ENCODE measurements at regions of chr12 and their contacts with region 1.

Region 1: DNA sequence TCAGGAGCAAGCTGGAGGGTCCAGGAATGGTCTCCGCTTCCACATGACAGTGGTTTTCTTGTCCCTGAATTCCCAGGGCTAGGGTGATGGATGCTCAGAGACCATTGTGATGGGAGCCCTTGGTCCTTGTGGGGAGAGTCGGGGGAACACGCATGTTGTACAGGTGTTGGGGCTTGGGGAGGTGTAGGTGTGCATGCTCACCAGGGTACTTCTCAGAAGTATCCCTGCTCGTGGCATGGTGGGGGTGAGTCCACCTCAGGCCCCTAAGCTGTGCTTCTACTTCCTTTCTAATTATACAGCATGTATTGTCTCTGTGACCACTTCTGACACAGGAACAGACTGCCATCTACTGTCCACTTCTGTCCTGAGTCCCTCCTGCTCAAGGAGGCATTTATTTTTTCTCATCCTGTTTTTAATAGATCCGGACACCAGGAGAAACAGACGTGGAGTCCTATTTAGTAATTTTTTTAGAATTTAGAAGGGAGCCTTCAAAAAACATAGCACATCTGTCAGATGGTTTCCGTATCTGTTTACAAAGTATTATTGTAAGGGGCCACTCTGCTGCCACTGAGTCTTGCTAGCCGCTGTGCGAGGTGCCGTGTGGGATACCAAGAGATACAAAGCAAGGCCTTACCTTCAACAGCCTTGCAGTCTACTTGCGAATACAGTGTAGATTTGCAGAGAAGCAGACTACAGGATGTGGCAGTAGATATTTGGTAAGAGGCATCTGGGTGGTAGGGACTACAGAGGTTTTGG is 10.5 kb downstream of the NTF3 start:
- DNase-seq: peak; percentile 43
- H3K4me3 ChIP-seq: no peak overlapping the region
- H3K27ac ChIP-seq: no peak overlapping the region
- H3K4me1 ChIP-seq: peaks cover 5% of the 10 kb centered on the region
- H3K27me3 ChIP-seq: peaks cover under 1% of the 10 kb centered on the region
- CTCF ChIP-seq: peak; percentile 83 to 87

Region 2: DNA sequence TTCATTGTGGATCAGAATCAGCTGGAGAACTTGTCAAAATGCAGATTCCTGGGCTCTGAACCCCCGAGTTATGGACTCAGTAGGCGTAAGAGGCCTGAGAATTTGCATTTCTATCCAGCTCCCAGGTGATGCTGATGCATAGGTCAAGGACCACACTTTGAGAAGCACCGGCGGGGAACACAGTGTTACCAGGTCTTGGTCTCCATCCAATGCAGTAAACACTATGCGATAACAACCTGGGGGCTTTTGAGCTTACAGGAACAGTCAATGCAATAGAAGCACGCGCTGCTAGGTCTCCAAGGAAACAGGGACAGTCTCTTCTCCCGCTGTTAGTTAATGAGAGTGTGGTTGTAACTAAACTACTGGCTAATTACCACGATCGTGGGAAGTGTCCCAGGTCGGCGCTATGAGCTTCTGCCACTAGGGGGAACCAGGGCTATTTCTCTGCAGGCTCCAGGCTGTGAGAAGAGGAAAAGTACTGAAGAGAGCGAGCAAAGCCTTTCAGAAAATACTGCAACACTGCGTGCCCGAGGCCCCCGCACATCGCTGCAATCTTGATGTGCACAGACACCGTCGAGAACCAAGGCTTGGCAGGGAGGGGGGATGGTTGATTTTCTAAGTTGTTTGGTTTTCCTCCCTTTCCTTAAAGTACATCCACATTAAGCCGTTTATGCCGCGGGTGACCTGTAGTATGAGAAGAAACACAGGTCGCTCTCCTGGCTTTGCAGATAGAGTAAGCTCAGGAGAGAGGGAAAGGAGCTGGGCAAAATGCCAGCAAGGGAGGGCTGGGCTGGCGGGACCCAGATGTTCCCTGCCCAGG is 584.7 kb before region 1 on chr12:
- CTCF ChIA-PET with region 1: no interaction called
- dilution Hi-C with region 1: no loop called
- in situ Hi-C with region 1: no loop called
- intact Hi-C with region 1: loop called (anchors 2 kb)
- DNase-seq: peak; percentile 39
- H3K4me3 ChIP-seq: no peak overlapping the region
- H3K27ac ChIP-seq: no peak overlapping the region
- H3K4me1 ChIP-seq: no peaks in the 10 kb centered on the region
- H3K27me3 ChIP-seq: no peaks in the 10 kb centered on the region
- CTCF ChIP-seq: peak; percentile 88 to 93

Region 3: DNA sequence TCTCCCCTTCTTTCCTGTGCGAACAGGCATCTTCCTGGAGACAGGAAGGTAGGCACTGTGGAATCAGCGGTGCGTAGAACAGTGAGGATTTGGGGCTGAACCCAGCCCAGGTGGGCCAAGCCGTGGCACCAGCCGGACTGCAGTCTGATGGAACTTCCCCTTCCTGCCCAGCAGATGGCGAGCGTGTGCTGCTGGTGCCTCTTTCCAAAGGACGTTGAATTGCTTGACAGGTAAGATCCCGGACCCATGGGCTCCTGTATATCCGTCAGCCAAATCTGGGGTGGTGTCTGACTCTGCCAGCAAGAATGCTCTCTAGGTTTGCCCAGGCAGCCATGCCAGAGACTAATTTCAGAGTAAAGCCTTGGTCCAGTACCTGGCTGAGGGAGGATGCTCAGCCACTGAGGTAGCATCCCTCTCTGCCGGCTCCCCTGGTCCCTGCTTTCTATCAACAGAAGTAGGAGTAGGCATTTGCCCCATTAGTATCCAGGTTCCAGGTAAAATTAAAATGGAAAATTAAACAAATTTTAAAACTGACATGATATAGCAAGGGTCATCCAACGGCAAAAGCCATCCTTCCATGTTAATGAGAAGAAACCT is 419.9 kb before region 1 on chr12:
- CTCF ChIA-PET with region 1: no interaction called
- dilution Hi-C with region 1: no loop called
- in situ Hi-C with region 1: loop called in 1 of 2 experiments (anchors 10 kb)
- intact Hi-C with region 1: loop called (anchors 1 kb)
- DNase-seq: peak; percentile 43
- H3K4me3 ChIP-seq: no peak overlapping the region
- H3K27ac ChIP-seq: no peak overlapping the region
- H3K4me1 ChIP-seq: peaks cover 6% of the 10 kb centered on the region
- H3K27me3 ChIP-seq: peaks cover 3% of the 10 kb centered on the region
- CTCF ChIP-seq: peak; percentile 81 to 94

Region 4: GRCh38 chr12:5096241-5096935 is 346.0 kb before region 1 on chr12:
- CTCF ChIA-PET with region 1: no interaction called
- dilution Hi-C with region 1: no loop called
- in situ Hi-C with region 1: no loop called
- intact Hi-C with region 1: loop called (anchors 1 kb)
- DNase-seq: peak; percentile 38
- H3K4me3 ChIP-seq: no peak overlapping the region
- H3K27ac ChIP-seq: no peak overlapping the region
- H3K4me1 ChIP-seq: peaks cover 3% of the 10 kb centered on the region
- H3K27me3 ChIP-seq: peaks cover 5% of the 10 kb centered on the region
- CTCF ChIP-seq: peak; percentile 9 to 44

Region 5: GRCh38 chr12:5171701-5172100 is 270.7 kb before region 1 on chr12:
- CTCF ChIA-PET with region 1: no interaction called
- dilution Hi-C with region 1: no loop called
- in situ Hi-C with region 1: loop called in 1 of 2 experiments (anchors 10 kb)
- intact Hi-C with region 1: loop called (anchors 1 kb)
- DNase-seq: peak; percentile 44
- H3K4me3 ChIP-seq: no peak overlapping the region
- H3K27ac ChIP-seq: no peak overlapping the region
- H3K4me1 ChIP-seq: peaks cover 6% of the 10 kb centered on the region
- H3K27me3 ChIP-seq: no peaks in the 10 kb centered on the region
- CTCF ChIP-seq: peak; percentile 76 to 78

Region 6: GRCh38 chr12:5200278-5201087 is 241.9 kb before region 1 on chr12:
- CTCF ChIA-PET with region 1: no interaction called
- dilution Hi-C with region 1: no loop called
- in situ Hi-C with region 1: loop called (anchors 10 kb)
- intact Hi-C with region 1: loop called (anchors 1 kb)
- DNase-seq: no peak
- H3K4me3 ChIP-seq: no peak overlapping the region
- H3K27ac ChIP-seq: no peak overlapping the region
- H3K4me1 ChIP-seq: peaks cover 8% of the 10 kb centered on the region
- H3K27me3 ChIP-seq: peaks cover 7% of the 10 kb centered on the region
- CTCF ChIP-seq: peak; percentile 73 to 87

Region 7: DNA sequence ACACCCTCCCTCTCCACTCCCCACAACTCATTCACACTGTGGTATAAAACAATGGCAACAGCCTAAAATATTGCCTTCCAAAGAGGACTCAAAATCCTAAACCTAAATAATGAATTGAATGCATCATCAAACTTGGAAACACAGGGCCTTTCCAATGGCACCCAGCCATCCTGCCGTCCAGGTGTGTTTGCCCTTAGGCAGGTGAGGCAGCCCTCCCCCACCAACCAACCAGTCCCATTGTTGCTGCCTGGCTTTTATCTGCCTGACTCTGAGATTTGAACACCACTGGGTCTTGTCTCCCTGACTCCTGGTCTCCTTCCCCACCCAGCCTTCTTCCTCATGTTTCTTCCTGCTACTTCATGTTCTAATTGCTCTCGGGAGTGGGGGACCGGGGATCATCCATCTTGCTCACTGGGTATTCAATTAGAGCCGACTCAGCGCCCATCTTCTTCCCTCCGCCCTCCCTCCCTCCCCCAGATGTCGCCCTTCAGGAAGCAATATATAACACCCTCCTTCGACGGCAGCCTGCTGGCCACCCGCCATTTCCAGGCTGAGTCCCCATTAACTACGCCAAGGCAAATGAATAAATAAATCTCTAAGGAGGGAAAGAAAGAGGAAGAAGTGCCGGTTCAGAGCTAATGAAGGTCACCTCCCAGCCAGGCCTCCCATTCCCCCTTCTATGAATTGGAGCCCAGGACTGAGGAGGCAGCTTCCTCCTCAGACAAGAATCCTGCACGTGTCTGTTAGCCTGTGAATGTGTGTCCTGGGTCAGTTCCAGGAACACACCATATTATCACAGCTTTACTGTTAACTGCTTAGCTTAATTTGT is 46.8 kb before region 1 on chr12:
- CTCF ChIA-PET with region 1: no interaction called
- dilution Hi-C with region 1: no loop called
- in situ Hi-C with region 1: no loop called
- intact Hi-C with region 1: no loop called
- DNase-seq: peak; percentile 30
- H3K4me3 ChIP-seq: no peak overlapping the region
- H3K27ac ChIP-seq: no peak overlapping the region
- H3K4me1 ChIP-seq: no peaks in the 10 kb centered on the region
- H3K27me3 ChIP-seq: no peaks in the 10 kb centered on the region
- CTCF ChIP-seq: no peak

Measured in mammary epithelial cell (primary cell).